AG04450 (cell line): ENCODE measurements at regions of chr14 and their contacts with region 1.

Region 1: DNA sequence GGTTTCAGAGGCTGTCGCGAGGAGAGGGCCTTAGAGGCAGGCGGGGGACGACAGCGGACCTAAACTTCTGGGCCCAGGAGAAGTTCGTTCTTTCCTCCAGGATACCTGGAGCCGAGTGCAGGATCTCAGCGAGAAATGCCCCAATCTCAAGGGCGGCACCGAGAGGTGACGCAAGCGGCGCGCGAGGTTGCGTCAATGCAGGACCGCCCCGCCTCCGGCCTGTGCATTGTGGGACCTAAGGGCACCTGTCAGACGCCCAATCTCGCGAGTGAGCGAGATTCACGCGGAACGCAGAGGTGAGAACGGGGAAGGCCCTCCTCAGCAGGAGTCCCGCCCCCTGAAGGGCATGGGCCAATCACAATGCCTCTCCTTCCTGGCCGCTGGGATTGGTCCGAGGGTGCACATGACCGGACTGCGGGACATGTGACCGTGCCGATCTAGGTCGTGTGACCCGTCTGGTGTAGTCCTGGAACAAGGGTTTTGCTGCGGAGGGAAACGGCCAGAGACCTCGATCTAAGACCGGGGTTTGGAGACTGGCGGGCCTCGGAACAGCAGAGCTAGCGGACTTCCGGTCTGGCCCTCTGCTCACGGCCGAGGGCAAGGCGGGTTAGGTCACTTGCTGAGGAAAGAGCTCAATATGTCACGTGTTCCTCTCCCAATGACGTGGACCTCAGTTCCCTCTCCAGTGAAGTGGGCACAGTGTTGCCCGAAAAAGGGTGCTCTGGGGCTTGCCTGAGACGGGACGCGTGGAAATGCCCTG is 16.3 kb upstream of the DYNC1H1 start:
- DNase-seq: peak; percentile 100
- H3K4me3 ChIP-seq: peak overlapping the region; percentile 98
- H3K27ac ChIP-seq: peak overlapping the region; percentile 99
- H3K27me3 ChIP-seq: peaks cover 10% of the 10 kb centered on the region
- CTCF ChIP-seq: no peak

Region 2: GRCh38 chr14:101439023-101439422 is 509.1 kb before region 1 on chr14:
- CTCF ChIA-PET with region 1: no interaction called
- POLR2A ChIA-PET with region 1: no interaction called
- DNase-seq: no peak
- H3K4me3 ChIP-seq: no peak overlapping the region
- H3K27ac ChIP-seq: no peak overlapping the region
- H3K27me3 ChIP-seq: no peaks in the 10 kb centered on the region
- CTCF ChIP-seq: no peak

Region 3: DNA sequence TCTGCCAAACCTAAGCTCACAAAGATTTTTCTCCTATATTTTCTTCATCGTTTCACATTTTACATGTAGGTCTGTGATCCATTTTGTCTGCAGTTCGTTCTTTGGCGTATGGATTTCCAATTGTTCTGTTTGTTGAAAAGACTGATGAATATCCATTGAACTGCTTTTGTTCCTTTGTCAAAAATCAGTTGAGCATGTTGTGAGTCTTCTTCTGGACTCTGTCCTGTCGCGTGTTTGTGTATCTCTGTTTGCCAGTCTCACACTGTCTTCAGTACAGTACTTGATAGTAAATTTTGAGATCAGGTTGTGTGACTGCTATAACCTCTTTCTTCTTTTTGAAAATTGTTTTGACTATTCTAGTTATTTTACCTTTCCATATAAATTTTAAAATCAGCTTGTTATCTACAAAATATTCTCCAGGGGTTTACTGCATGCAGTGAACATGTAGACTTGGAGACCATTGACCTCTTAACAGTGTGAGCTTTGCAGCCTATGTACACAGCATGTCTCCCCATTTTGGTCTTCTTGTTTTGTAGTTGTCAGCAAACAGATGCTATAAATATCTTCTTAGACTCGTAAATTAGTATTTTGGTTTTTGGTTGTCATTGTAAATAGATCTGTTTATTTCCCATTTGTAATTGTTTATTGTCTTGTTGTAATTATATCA is 77.7 kb before region 1 on chr14:
- CTCF ChIA-PET with region 1: no interaction called
- POLR2A ChIA-PET with region 1: interaction called, 11 read pairs
- DNase-seq: no peak
- H3K4me3 ChIP-seq: no peak overlapping the region
- H3K27ac ChIP-seq: no peak overlapping the region
- H3K27me3 ChIP-seq: no peaks in the 10 kb centered on the region
- CTCF ChIP-seq: no peak

Region 4: DNA sequence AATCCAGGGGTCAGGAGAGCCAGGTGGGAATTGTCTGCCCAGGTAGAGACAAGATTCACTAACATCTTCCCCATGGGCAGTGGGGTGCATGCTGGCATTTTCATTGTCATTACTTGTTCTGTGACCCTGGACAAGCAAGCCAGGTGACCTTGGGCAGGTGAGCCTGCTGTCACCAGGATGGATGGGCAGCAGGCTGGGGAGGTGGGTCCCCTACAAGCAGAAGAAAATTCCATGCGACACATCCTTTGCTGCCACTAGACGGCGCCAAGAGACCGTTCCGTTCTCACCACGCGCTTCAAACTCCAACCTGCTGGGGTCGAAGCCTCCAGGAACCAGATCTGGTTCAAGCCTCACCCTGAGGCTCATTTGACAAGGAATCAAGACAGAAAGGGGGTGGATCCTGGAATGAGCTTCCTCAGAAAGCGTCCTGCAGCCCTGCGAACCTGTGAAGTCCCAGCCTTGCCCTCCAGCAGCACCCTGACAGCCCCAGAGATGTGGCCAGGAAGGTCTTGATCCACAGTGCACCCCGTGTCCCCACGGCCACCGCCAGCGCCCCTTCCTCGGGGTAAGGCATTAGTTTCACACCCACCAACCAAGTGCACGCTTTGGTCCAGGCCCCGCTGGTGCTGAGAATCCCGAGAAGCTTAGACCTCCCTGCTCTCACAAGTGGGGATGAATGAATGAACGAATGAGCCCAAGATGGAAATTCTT is 13.1 kb after region 1 on chr14:
- CTCF ChIA-PET with region 1: interaction called, 22 read pairs
- POLR2A ChIA-PET with region 1: interaction called, 3 read pairs
- DNase-seq: peak; percentile 50
- H3K4me3 ChIP-seq: no peak overlapping the region
- H3K27ac ChIP-seq: no peak overlapping the region
- H3K27me3 ChIP-seq: no peaks in the 10 kb centered on the region
- CTCF ChIP-seq: peak; percentile 91